OCI-LY7 (cell line): ENCODE measurements at regions of chr9 and their contacts with region 1.

Region 1: GRCh38 chr9:110058304-110058953 is 149.5 kb downstream of the C9orf152 start:
- DNase-seq: peak; percentile 70
- H3K4me3 ChIP-seq: peak overlapping the region; percentile 23
- H3K27ac ChIP-seq: peak overlapping the region; percentile 48
- H3K4me1 ChIP-seq: peaks cover 44% of the 10 kb centered on the region
- CTCF ChIP-seq: peak; percentile 89

Region 2: DNA sequence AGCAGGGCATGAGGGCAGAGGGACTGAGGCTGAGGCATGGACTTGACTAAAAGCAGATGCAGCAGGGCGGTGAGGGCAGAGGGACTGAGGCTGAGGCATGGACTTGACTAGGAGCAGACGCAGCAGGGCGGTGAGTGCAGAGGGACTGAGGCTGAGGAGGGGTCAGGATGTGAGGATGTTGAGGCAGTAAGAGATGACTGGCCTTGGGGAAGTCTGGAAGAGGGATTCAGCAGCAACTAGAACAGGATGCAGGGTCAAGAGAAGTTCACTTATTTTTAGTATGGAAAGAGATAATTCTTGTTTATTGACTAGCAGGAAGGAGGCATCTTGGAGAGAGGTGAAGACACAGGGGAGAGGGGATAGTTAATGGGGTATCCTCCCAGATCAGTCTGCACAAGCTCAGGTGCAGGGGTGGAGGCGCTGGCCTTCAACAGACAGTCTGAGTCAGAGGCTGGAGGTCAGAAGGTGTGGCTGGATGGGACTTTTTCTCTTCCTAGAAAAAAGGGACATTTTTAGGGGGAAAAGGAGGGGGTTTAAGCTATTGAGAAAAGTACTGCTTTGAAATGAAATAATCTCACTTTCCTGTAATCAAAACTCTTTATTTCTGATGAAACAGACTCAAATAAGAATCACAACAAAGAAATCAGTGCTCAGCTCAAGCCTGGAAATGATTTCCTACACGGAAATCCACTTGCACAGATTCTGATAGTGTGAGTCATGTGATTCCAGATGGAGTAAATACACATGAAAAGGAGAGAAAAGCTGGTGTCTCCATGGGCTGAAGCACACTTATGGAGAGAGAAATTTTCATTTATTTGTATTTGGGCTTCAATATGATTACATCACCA is 147.5 kb before region 1 on chr9:
- CTCF ChIA-PET with region 1: interaction called, 5 read pairs
- POLR2A ChIA-PET with region 1: interaction called, 14 read pairs
- intact Hi-C with region 1: loop called (anchors 1 kb)
- DNase-seq: no peak
- H3K4me3 ChIP-seq: no peak overlapping the region
- H3K27ac ChIP-seq: peak overlapping the region; percentile 98
- H3K4me1 ChIP-seq: peaks cover 100% of the 10 kb centered on the region
- CTCF ChIP-seq: no peak